ENCODE measurements at regions of chrX and their contacts with region 1.

Region 1: GRCh38 chrX:133792198-133792953 is 193.0 kb downstream of the GPC3 start:
- DNase-seq: peak; percentile 70
- ATAC-seq: peak; percentile 66
- H3K4me3 ChIP-seq: no peak overlapping the region
- H3K4me3 Mint-ChIP-seq: no peak overlapping the region
- H3K27ac ChIP-seq: no peak overlapping the region
- H3K27ac Mint-ChIP-seq: no peak overlapping the region
- H3K4me1 ChIP-seq: peaks cover 0 to 3% of the 10 kb centered on the region in 2 donors
- H3K4me1 Mint-ChIP-seq: peaks cover 4% of the 10 kb centered on the region
- H3K27me3 ChIP-seq: no peaks in the 10 kb centered on the region
- H3K27me3 Mint-ChIP-seq: no peaks in the 10 kb centered on the region
- CTCF ChIP-seq: peak; percentile 90

Region 2: DNA sequence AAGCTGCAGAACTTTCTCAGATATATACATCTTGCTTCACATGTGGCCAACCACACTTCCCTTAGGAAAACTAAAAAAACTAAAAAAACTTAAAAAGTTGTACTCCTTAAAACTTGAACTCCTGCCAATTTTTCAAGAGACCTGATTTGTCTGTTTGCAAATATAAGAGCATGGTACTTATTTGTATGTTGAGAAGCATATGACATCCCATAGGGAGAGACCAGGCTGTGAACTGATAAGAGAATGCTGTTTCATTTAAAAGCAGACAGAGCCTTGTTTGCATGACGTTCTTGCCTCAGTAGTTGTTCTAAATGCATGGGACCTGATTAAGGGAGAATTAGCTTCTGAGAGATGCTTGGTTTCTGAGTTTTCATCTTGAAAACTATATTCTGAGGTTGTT is 23.1 kb after region 1 on chrX:
- CTCF ChIA-PET with region 1: no interaction called
- POLR2A ChIA-PET with region 1: no interaction called
- intact Hi-C with region 1: no loop called
- DNase-seq: no peak
- ATAC-seq: no peak
- H3K4me3 ChIP-seq: no peak overlapping the region
- H3K4me3 Mint-ChIP-seq: no peak overlapping the region
- H3K27ac ChIP-seq: no peak overlapping the region
- H3K27ac Mint-ChIP-seq: no peak overlapping the region
- H3K4me1 ChIP-seq: no peaks in the 10 kb centered on the region
- H3K4me1 Mint-ChIP-seq: no peaks in the 10 kb centered on the region
- H3K27me3 ChIP-seq: no peaks in the 10 kb centered on the region
- H3K27me3 Mint-ChIP-seq: no peaks in the 10 kb centered on the region
- CTCF ChIP-seq: no peak

Region 3: GRCh38 chrX:133838761-133839676 is 46.6 kb after region 1 on chrX:
- CTCF ChIA-PET with region 1: interaction called, 14 read pairs
- POLR2A ChIA-PET with region 1: no interaction called
- intact Hi-C with region 1: loop called (anchors 1 kb)
- DNase-seq: peak; percentile 46
- ATAC-seq: no peak
- H3K4me3 ChIP-seq: no peak overlapping the region
- H3K4me3 Mint-ChIP-seq: no peak overlapping the region
- H3K27ac ChIP-seq: no peak overlapping the region
- H3K27ac Mint-ChIP-seq: peak overlapping the region; percentile 15
- H3K4me1 ChIP-seq: no peaks in the 10 kb centered on the region
- H3K4me1 Mint-ChIP-seq: peaks cover 8% of the 10 kb centered on the region
- H3K27me3 ChIP-seq: no peaks in the 10 kb centered on the region
- H3K27me3 Mint-ChIP-seq: no peaks in the 10 kb centered on the region
- CTCF ChIP-seq: peak; percentile 52

Region 4: DNA sequence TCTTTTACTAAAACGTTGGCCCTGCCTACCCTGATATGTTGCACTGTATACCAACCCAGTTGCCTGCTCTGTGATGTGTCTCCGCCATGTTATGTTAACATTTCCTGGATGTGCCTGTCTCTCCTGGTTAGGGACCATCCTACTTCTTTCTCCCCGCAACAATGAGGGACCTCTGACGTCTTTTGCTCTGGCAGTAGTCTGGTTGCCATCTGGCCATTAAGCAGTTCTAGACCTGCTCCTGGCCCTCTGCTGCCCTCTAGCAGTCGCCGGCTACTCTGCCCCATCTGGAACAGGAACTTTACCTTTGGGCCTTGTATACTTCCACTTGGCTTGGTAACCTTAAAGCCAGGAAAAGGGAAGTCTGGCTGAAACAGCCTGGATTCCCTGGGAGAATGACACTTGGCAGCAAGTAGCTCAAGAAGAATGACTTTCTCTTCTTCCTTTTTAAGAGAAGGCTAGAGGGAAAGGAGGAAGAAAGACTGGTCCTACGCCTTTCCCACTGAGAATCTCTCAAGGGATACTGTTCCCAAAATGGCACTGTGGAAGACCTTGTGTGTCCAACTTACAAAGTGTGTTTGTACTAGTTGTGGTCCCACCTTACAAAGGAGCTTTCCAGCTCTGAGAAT is 129.5 kb after region 1 on chrX:
- CTCF ChIA-PET with region 1: interaction called, 6 read pairs
- POLR2A ChIA-PET with region 1: no interaction called
- intact Hi-C with region 1: loop called (anchors 2 kb)
- DNase-seq: peak; percentile 17
- ATAC-seq: no peak
- H3K4me3 ChIP-seq: no peak overlapping the region
- H3K4me3 Mint-ChIP-seq: no peak overlapping the region
- H3K27ac ChIP-seq: no peak overlapping the region
- H3K27ac Mint-ChIP-seq: no peak overlapping the region
- H3K4me1 ChIP-seq: peaks cover 4 to 9% of the 10 kb centered on the region in 2 donors
- H3K4me1 Mint-ChIP-seq: peaks cover 6% of the 10 kb centered on the region
- H3K27me3 ChIP-seq: no peaks in the 10 kb centered on the region
- H3K27me3 Mint-ChIP-seq: no peaks in the 10 kb centered on the region
- CTCF ChIP-seq: peak; percentile 32

Region 5: GRCh38 chrX:134026565-134027311 is 234.4 kb after region 1 on chrX:
- CTCF ChIA-PET with region 1: interaction called, 14 read pairs
- POLR2A ChIA-PET with region 1: no interaction called
- intact Hi-C with region 1: loop called (anchors 2 kb)
- DNase-seq: peak; percentile 6
- ATAC-seq: no peak
- H3K4me3 ChIP-seq: no peak overlapping the region
- H3K4me3 Mint-ChIP-seq: no peak overlapping the region
- H3K27ac ChIP-seq: no peak overlapping the region
- H3K27ac Mint-ChIP-seq: no peak overlapping the region
- H3K4me1 ChIP-seq: no peaks in the 10 kb centered on the region
- H3K4me1 Mint-ChIP-seq: no peaks in the 10 kb centered on the region
- H3K27me3 ChIP-seq: no peaks in the 10 kb centered on the region
- H3K27me3 Mint-ChIP-seq: no peaks in the 10 kb centered on the region
- CTCF ChIP-seq: no peak

Region 6: GRCh38 chrX:134144231-134144630 is 351.9 kb after region 1 on chrX:
- CTCF ChIA-PET with region 1: interaction called, 15 read pairs
- POLR2A ChIA-PET with region 1: no interaction called
- intact Hi-C with region 1: loop called (anchors 2 kb)
- DNase-seq: peak; percentile 19
- ATAC-seq: no peak
- H3K4me3 ChIP-seq: no peak overlapping the region
- H3K4me3 Mint-ChIP-seq: no peak overlapping the region
- H3K27ac ChIP-seq: no peak overlapping the region
- H3K27ac Mint-ChIP-seq: no peak overlapping the region
- H3K4me1 ChIP-seq: no peaks in the 10 kb centered on the region
- H3K4me1 Mint-ChIP-seq: no peaks in the 10 kb centered on the region
- H3K27me3 ChIP-seq: no peaks in the 10 kb centered on the region
- H3K27me3 Mint-ChIP-seq: peaks cover 4% of the 10 kb centered on the region
- CTCF ChIP-seq: peak; percentile 35

Region 7: GRCh38 chrX:134246282-134246681 is 453.9 kb after region 1 on chrX:
- CTCF ChIA-PET with region 1: no interaction called
- POLR2A ChIA-PET with region 1: no interaction called
- intact Hi-C with region 1: loop called (anchors 10 kb)
- DNase-seq: peak; percentile 14
- ATAC-seq: no peak
- H3K4me3 ChIP-seq: no peak overlapping the region
- H3K4me3 Mint-ChIP-seq: no peak overlapping the region
- H3K27ac ChIP-seq: no peak overlapping the region
- H3K27ac Mint-ChIP-seq: no peak overlapping the region
- H3K4me1 ChIP-seq: no peaks in the 10 kb centered on the region
- H3K4me1 Mint-ChIP-seq: no peaks in the 10 kb centered on the region
- H3K27me3 ChIP-seq: peaks cover 0 to 11% (median 0%) of the 10 kb centered on the region in 4 experiments
- H3K27me3 Mint-ChIP-seq: peaks cover 4% of the 10 kb centered on the region
- CTCF ChIP-seq: no peak

Region 8: DNA sequence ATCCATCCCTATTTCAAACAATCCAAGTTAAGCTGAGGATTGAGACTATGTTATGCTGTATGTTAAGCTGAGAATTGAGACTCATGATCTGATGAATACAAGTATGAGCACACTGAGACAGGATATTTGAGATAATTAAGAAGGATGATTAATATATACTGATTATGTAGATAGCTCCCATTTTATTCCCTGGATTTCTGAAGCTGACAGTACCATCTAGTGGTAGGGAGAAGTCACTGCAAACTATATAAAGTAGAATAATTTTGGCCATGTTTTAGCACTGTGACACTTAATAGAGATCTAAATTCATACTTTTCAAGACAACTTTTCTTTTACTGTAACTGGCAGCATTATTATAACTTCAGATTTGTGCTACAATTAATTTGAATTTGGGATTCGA is 603.8 kb after region 1 on chrX:
- CTCF ChIA-PET with region 1: interaction called, 17 read pairs
- POLR2A ChIA-PET with region 1: no interaction called
- intact Hi-C with region 1: no loop called
- DNase-seq: peak; percentile 36
- ATAC-seq: no peak
- H3K4me3 ChIP-seq: no peak overlapping the region
- H3K4me3 Mint-ChIP-seq: no peak overlapping the region
- H3K27ac ChIP-seq: no peak overlapping the region
- H3K27ac Mint-ChIP-seq: no peak overlapping the region
- H3K4me1 ChIP-seq: no peaks in the 10 kb centered on the region
- H3K4me1 Mint-ChIP-seq: no peaks in the 10 kb centered on the region
- H3K27me3 ChIP-seq: no peaks in the 10 kb centered on the region
- H3K27me3 Mint-ChIP-seq: no peaks in the 10 kb centered on the region
- CTCF ChIP-seq: peak; percentile 67